ENCODE measurements at regions of chr10 and their contacts with region 1.

Region 1: DNA sequence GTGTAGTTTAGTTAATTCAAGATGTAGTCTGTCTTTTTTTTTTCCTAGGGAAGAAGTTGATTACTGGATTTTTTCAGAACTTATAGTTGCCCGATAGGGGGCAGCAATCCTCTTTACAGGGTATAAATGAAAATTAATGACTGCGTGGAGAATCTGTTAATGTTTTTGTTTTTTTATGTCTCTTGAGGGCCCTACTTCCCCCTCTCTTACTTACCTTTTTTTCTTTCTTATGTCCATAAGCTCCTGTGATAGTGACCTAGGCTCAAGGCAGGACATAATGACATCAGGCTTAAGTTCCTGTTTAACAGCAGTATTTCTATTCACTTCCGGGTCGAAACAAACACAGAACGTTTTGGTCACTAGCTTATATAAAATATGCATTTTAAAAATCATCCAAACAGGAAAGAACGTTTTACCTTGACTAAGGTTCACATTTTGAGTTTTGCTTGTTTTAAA is 18.8 kb downstream of the CDC123 start:
- DNase-seq: no peak
- H3K4me3 ChIP-seq: peak overlapping the region in 1 of 2 donors; percentile 53
- H3K27ac ChIP-seq: peak overlapping the region; percentile 41 to 52
- H3K4me1 ChIP-seq: peaks cover 0 to 1% of the 10 kb centered on the region in 2 donors
- H3K27me3 ChIP-seq: no peaks in the 10 kb centered on the region
- CTCF ChIP-seq: peak; percentile 55 to 72 (median 69)

Region 2: GRCh38 chr10:12271210-12271540 is 56.4 kb after region 1 on chr10:
- intact Hi-C with region 1: no loop called
- DNase-seq: no peak
- H3K4me3 ChIP-seq: no peak overlapping the region
- H3K27ac ChIP-seq: no peak overlapping the region
- H3K4me1 ChIP-seq: peaks cover 0 to 4% of the 10 kb centered on the region in 2 donors
- H3K27me3 ChIP-seq: no peaks in the 10 kb centered on the region
- CTCF ChIP-seq: no peak

Region 3: GRCh38 chr10:12656518-12657142 is 441.8 kb after region 1 on chr10:
- intact Hi-C with region 1: loop called (anchors 5 kb)
- DNase-seq: no peak
- H3K4me3 ChIP-seq: no peak overlapping the region
- H3K27ac ChIP-seq: no peak overlapping the region
- H3K4me1 ChIP-seq: no peaks in the 10 kb centered on the region
- H3K27me3 ChIP-seq: no peaks in the 10 kb centered on the region
- CTCF ChIP-seq: peak; percentile 37 to 66 (median 63)

Region 4: DNA sequence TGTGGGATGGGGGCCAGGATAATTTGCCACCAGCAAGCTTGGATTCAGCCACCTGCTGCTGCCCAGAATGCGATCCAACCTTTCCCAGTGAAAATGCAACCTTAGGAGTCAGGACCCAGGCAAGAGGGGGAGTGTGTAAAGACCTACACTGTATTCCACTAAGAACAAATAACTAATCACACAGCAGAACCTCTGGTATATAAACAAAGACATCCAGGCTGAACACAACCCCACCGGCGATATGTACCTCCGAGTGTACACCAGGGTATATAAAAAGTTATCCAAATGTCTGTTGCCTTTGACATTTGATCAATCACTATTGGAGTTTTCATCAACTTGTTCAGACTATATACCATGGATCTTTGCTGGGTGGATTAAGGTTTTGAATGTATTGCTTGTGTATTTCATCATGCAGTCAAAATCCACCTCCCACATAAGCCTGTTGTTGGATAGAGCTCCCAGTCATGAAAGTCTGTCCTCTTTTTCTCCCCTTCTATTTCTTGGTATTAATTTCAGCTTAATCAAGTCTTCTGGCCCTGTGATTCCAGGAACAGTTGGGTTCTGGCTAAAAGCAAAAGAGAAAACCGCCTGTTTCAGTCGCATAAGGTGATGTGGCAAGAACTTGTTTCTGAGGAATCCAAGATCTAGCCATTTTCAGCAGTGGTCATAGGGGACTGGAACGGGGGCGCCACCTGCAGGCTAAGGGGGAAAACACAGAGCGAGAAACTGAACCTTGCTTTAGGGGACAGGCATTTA is 496.0 kb after region 1 on chr10:
- intact Hi-C with region 1: loop called (anchors 5 kb)
- DNase-seq: peak in 1 of 2 donors; percentile 88
- H3K4me3 ChIP-seq: no peak overlapping the region
- H3K27ac ChIP-seq: peak overlapping the region; percentile 82
- H3K4me1 ChIP-seq: peaks cover 15 to 39% of the 10 kb centered on the region in 2 donors
- H3K27me3 ChIP-seq: no peaks in the 10 kb centered on the region
- CTCF ChIP-seq: peak; percentile 87 to 94 (median 90)

Measured in ascending aorta (tissue), 2 donors.